GM10248 (cell line): ENCODE measurements at regions of chr9 and their contacts with region 1.

Region 1: GRCh38 chr9:72524820-72525540 is 3.6 kb downstream of the TMC1 start:
- DNase-seq: peak; percentile 30
- CTCF ChIP-seq: no peak

Region 2: GRCh38 chr9:72322259-72322658 is 202.7 kb before region 1 on chr9:
- CTCF ChIA-PET with region 1: no interaction called
- POLR2A ChIA-PET with region 1: no interaction called
- DNase-seq: no peak
- CTCF ChIP-seq: no peak

Region 3: GRCh38 chr9:72509048-72509447 is 15.9 kb before region 1 on chr9:
- CTCF ChIA-PET with region 1: interaction called, 10 read pairs
- POLR2A ChIA-PET with region 1: no interaction called
- DNase-seq: no peak
- CTCF ChIP-seq: no peak

Region 4: DNA sequence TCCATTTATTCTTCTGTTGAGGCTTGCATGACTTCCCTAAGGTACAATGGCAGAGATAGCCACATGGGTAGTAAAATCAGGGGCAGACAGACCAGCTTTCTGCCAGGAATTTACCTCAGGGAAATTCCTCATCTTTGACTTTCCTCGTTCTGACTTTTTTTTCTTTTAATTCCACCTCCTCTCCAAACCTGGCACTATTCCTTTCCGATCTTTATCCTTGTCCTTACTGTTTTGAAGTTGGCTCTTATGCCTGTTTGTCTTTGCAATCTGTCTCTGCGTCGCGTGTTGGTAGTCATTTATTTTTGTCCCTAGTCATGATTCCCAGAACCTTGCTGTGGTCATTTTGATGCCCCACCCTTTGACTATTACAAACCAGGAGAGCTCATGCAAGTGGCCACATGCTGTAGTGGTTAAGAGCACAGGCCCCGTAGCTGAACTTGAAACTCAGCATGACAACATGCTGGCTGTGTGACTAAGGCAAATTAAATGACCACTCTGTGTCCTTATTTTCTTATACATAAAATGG is 15.4 kb after region 1 on chr9:
- CTCF ChIA-PET with region 1: interaction called, 11 read pairs
- POLR2A ChIA-PET with region 1: interaction called, 4 read pairs
- DNase-seq: no peak
- CTCF ChIP-seq: no peak